HEK293 (cell line): ENCODE measurements at regions of chr6 and their contacts with region 1.

Region 1: GRCh38 chr6:42901536-42901957 is 14.3 kb upstream of the PTCRA start:
- H3K4me3 ChIP-seq: no peak overlapping the region
- H3K27ac ChIP-seq: no peak overlapping the region
- H3K4me1 ChIP-seq: no peaks in the 10 kb centered on the region; the same call in 1 of the 2 replicates
- CTCF ChIP-seq: peak; percentile 85

Region 2: GRCh38 chr6:42482174-42482573 is 419.4 kb before region 1 on chr6:
- CTCF ChIA-PET with region 1: no interaction called
- POLR2A ChIA-PET with region 1: no interaction called
- H3K4me3 ChIP-seq: no peak overlapping the region
- H3K27ac ChIP-seq: no peak overlapping the region
- H3K4me1 ChIP-seq: no peaks in the 10 kb centered on the region
- CTCF ChIP-seq: no peak

Region 3: DNA sequence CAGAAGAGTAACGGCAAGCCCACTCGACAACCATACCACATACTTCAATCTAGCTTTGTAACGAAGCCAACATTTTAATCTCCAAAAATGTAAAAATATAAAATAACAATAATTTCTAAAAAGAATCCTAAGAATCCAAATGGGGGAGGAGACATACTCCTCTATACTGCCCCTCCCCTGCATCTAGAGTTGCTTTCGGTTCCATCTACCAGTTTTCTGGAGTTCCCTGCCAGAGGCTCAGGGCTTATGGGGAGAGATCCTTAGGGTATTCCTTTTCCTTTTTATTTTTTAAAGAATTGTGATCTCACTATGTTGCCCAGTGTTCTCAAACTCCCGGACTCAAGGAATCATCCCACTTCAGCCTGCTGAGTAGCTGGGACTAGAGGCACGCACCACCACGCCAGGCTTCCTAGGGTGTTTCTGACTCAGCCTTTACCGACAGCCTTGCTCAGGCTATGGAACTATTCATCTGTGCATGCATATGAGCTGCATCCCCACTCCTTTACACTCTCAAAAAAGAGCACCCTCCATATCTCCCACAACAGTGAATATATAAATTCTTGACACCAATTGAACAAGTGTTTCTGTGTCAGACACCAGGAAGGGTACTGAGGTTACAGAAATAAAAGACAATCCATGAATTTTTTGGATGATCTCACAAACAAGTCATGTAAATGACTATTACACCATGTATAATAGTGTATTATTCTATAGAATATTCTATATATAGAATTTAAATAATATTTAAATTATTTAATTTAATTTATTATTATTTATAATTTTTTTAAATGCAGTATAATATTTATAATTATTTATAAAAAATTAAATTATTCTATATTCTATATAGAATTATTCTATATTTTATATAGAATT is 378.4 kb before region 1 on chr6:
- CTCF ChIA-PET with region 1: no interaction called
- POLR2A ChIA-PET with region 1: no interaction called
- H3K4me3 ChIP-seq: no peak overlapping the region
- H3K27ac ChIP-seq: no peak overlapping the region
- H3K4me1 ChIP-seq: no peaks in the 10 kb centered on the region
- CTCF ChIP-seq: no peak

Region 4: DNA sequence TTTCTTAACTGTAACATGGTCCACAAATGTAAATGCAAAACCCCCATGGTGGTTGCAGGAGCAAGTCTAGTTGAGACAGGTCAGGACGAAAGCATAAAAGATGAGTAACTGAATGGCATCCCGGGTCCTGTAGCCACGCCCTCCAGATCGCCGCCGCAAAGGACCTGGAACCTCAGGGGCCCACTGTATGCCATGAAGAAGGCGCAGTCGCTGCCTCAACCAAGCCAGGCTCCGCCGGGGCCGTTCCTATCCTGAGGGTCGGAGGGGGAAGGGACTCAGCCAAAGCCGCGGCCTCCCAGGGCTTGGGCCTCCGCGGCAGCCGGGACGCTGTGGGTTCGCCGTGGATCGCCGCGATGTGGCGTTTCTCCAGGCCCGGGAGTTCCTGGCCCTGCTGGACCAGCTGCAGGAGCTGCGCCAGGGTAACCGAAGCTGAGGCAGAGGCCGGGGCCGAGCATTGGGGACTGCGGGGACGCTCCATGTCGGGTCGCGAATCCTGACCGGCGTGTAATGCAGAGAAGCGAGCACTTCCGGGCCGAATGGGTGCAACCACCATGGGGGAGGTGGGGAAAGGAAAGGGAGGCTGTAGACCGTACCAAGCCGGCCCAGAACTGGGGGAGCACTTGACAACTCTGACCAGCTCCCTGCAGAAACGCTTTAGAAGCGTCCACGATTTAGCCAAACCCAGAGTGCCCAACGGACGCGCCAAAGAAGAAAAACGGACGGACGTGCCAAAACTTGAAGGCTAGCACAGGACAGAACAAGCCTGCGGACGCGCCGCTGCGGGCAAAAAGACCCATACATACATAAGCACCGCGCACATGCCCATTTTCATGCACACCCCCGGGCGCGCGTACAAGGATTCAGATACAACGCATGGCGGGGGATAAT is 11.0 kb before region 1 on chr6:
- CTCF ChIA-PET with region 1: interaction called, 31 read pairs
- POLR2A ChIA-PET with region 1: interaction called, 5 read pairs
- H3K4me3 ChIP-seq: peak overlapping the region; percentile 66
- H3K27ac ChIP-seq: peak overlapping the region; percentile 94
- H3K4me1 ChIP-seq: no peaks in the 10 kb centered on the region
- CTCF ChIP-seq: peak; percentile 51; the same call in 1 of the 2 replicates

Region 5: DNA sequence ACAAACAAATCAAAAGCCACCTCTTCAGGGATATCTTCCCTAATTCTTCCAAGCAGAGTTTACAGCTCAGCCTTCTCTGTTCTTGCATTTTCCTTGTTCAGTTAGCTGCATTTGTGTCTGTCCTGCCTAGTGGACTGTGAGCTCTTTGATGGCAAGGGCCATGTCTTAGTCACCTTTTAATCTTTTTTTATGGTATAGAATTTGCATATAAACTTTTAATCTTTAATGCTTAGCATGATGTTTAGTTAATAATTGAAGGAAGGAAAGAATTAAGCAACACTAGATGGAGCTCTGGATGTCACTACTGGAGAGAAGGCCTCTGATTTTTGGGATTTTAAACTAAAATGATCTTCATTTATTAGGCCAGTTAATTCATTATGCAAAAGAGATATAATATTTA is 95.0 kb after region 1 on chr6:
- CTCF ChIA-PET with region 1: interaction called, 10 read pairs
- POLR2A ChIA-PET with region 1: no interaction called
- H3K4me3 ChIP-seq: no peak overlapping the region
- H3K27ac ChIP-seq: no peak overlapping the region
- H3K4me1 ChIP-seq: no peaks in the 10 kb centered on the region
- CTCF ChIP-seq: no peak

Region 6: DNA sequence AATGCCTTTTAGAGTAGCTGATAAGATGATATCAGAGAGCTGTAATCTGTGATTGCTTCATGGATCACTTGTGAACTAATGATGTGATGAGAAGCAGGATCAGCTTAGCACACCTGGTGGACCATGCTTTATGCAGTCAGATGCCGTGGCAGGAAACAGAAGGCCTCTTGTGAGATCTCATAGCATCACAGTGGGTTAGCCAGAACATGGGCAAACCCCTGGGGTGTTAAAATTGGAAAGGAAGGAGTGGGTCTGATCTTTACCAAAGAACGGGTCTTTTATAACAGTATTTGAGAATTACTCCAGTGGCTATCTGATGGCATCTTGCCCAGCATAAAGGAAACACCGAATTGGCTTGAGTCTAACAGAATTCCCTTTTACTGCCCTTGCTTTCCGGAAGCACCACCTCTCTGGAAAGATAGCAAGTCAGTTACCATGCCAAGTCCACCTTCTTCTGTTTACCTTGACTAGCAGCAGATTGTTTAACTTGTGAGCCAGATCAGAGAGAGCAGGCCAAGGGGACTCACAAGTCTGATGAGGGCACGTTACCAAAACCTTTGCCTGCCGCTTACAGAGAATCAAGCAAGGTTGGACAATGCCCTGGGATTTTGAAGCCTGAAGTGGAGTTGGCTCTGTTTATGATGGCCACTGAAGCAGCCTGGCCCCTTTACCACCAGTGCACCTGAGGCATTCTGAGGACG is 248.7 kb after region 1 on chr6:
- CTCF ChIA-PET with region 1: interaction called, 44 read pairs
- POLR2A ChIA-PET with region 1: no interaction called
- H3K4me3 ChIP-seq: no peak overlapping the region
- H3K27ac ChIP-seq: no peak overlapping the region
- H3K4me1 ChIP-seq: no peaks in the 10 kb centered on the region
- CTCF ChIP-seq: no peak